ENCODE measurements at regions of chr6 and their contacts with region 1.

Region 1: GRCh38 chr6:26520853-26521599 is 17.1 kb upstream of the HMGN4 start:
- DNase-seq: peak; percentile 95
- H3K4me3 Mint-ChIP-seq: peak overlapping the region; percentile 85
- H3K27ac Mint-ChIP-seq: peak overlapping the region; percentile 94
- H3K4me1 Mint-ChIP-seq: peaks cover 32% of the 10 kb centered on the region
- H3K27me3 Mint-ChIP-seq: peaks cover 4% of the 10 kb centered on the region

Region 2: DNA sequence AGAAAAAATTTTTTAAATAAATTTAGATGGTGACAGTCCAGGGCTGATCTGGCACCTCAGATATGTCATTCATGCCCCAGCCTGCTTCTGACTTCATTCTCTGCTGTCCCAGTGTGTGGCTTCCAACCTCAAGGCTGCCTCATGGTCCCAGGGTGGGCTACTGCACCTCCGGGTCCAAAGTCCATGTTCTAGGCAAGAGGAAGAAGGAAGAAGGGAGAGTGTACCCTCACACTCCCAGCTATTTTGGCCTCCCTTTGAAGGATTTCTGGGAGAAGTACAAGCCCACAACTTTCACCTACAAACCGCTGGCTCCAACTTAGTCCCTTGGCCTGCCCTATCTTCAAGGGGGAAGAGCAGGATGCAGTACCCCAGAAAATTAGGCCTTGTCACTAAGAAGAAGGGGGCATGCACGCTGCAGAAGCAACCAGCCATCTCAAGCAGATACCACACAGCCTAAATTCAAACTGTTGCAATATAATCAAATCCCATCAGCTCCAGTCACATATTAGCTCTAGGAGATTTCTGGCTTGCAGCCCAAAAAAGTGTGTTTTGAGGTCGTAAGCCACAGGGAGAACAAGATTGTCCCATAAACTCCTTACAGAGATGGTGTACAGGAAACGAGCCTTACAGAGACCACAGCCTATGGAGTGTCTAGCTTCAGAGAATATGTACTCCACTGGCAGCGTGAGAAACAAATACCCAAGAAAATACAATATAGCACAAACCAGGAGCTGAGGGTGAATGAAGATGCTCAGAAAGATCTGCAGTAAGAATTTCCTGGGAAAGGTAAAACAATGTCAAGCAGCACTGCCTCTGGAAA is 156.9 kb before region 1 on chr6:
- intact Hi-C with region 1: loop called (anchors 5 kb)
- DNase-seq: peak; percentile 75
- H3K4me3 Mint-ChIP-seq: no peak overlapping the region
- H3K27ac Mint-ChIP-seq: no peak overlapping the region
- H3K4me1 Mint-ChIP-seq: peaks cover 41% of the 10 kb centered on the region
- H3K27me3 Mint-ChIP-seq: no peaks in the 10 kb centered on the region

Region 3: DNA sequence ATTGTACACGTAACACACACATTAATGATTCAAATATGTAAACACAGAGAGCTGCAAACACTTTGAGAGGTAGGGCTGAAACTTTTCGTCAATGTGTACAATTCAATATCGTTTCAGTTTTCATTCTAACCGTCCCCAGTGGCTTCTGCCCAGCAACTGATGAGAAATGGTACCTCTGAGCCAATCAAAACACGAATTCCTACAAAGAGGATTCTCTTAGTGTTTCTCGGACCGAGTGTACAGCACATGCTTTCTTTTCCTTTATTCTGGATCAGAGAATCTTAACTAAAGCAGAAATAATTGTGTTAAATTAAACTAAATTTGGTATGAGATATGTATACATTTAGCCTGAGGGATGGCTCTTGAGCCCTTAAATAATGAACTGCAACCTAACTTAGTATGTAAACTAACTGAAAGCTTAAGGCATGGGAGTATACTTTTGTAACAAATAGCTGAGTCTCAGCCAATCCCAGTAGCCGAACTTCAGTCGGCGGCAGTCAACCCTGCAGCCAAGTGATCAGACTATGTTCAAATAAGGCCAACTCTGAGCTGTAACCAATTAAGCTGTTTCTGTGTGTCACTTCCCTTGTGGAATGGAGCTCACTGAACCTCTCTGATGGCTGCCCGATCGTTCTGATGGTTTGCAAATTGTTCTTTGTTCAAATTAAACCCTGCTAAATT is 47.1 kb before region 1 on chr6:
- intact Hi-C with region 1: loop called (anchors 1 kb)
- DNase-seq: peak; percentile 95
- H3K4me3 Mint-ChIP-seq: peak overlapping the region; percentile 96
- H3K27ac Mint-ChIP-seq: peak overlapping the region; percentile 100
- H3K4me1 Mint-ChIP-seq: peaks cover 30% of the 10 kb centered on the region
- H3K27me3 Mint-ChIP-seq: no peaks in the 10 kb centered on the region

Region 4: DNA sequence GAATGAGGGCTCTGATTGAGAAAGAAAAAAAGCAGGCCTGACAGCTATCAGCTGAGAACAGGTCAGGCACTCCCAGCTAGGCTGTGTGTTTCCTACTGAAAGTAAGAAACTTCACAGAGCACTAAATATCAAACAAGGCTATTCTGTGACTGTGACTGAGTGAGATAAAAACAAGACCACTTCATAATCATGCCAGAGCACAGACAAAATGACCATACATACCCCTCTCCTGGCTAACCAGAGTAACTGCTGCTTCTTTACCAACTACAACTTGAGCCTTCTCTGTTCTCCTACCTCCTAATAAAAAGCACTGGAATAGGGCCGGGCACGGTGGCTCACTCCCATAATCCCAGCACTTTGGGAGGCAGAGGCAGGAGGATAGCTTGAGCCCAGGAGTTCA is 27.8 kb before region 1 on chr6:
- intact Hi-C with region 1: no loop called
- DNase-seq: no peak
- H3K4me3 Mint-ChIP-seq: no peak overlapping the region
- H3K27ac Mint-ChIP-seq: peak overlapping the region; percentile 25
- H3K4me1 Mint-ChIP-seq: peaks cover 24% of the 10 kb centered on the region
- H3K27me3 Mint-ChIP-seq: no peaks in the 10 kb centered on the region

Region 5: DNA sequence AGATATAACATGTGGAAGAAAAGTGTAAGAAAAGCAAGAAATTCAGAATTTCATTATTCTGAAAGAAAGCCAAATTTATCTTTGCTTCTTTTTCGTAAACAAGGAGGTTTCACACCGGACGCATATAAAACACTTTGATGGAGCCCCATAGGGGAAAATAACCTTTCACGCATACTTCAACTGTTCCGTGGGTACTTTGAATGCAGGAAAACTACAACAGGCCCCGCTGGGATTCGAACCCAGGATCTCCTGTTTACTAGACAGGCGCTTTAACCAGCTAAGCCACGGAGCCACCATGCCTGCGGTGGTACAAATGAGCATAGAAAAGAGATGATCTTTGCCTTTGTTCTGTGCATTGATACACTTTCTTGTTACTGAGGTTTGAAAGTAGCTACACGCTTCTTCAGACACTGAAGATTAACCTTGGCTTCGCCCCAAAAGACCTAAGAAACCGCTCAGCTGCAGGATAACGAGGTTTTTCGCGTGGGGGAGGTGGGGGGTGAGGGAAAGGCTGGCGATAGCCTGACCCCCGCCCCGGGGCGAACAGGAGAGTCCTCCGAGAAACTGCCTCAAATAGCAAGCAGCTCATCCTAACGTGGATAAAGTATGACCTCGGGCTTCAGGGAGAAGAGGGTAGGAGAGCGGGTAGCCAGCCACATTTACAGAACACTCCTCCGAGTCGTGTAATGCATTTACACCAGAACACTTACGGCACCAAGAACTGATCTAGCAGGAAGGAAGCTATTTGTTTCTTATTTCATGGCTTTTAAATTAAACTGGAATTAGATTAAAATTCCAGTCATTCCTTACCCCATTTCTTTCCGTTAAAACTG is 11.9 kb after region 1 on chr6:
- intact Hi-C with region 1: loop called (anchors 1 kb)
- DNase-seq: peak; percentile 97
- H3K4me3 Mint-ChIP-seq: peak overlapping the region; percentile 96
- H3K27ac Mint-ChIP-seq: peak overlapping the region; percentile 97
- H3K4me1 Mint-ChIP-seq: peaks cover 38% of the 10 kb centered on the region
- H3K27me3 Mint-ChIP-seq: peaks cover 2% of the 10 kb centered on the region

Region 6: DNA sequence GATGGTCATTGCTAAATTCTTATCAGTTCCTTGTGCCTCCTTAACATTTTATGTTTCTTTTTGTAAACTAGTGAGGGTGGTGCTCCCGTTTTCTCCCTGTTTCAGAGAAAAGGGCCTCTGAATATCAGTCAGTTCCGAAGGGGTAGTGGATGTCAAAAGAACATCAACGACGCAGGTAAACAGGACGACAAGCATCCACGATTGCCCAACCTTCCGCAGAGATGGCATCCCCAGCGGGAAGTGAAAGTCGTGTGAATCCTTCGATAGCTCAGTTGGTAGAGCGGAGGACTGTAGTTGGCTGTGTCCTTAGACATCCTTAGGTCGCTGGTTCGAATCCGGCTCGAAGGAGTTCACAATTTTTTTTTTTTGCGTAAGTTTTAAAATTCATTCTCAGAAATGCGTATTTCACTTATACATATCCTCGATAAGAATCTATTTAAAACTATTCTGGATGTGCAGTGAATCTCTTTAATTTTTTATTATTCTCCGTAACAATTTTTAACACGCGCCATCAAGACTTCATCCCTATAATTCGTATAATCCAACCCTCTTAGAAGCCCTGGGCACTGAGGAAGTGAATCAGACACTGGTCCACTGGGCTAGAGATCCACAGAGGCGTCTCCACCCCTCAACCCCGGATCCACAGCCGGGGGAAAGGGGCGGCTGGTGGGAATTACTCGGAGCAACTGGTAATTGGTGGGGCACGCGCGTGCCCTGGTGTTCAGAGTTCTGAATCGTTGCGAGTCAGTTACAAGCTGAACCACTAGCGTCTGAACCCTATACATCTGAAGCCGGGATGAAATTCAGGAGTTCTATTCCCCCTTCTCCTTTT is 47.8 kb after region 1 on chr6:
- intact Hi-C with region 1: loop called (anchors 1 kb)
- DNase-seq: peak; percentile 99
- H3K4me3 Mint-ChIP-seq: peak overlapping the region; percentile 88
- H3K27ac Mint-ChIP-seq: peak overlapping the region; percentile 88
- H3K4me1 Mint-ChIP-seq: peaks cover 32% of the 10 kb centered on the region
- H3K27me3 Mint-ChIP-seq: peaks cover 5% of the 10 kb centered on the region

Measured in activated CD4-positive, alpha-beta T cell treated with anti-CD3 and anti-CD28 coated beads, Interleukin-2, amount 10 ng/mL, durations not matched to agents 24 days and 14 days (primary cell).